Naive thymus-derived CD4-positive, alpha-beta T cell (primary cell): ENCODE measurements at regions of chr2 and their contacts with region 1.

Region 1: GRCh38 chr2:135985018-135985825 is at the start of gene DARS1:
- DNase-seq: peak; percentile 67 to 89 (median 78)
- ATAC-seq: peak; percentile 92
- H3K4me3 ChIP-seq: peak within 1 kb of the TSS; percentile 82
- H3K4me3 Mint-ChIP-seq: peak within 1 kb of the TSS; percentile 90 to 99 (median 97)
- H3K27ac ChIP-seq: peak within 1 kb of the TSS; percentile 95
- H3K27ac Mint-ChIP-seq: peak within 1 kb of the TSS; percentile 98 to 99 (median 98)
- H3K4me1 ChIP-seq: peaks cover 0 to 24% of the 10 kb centered on the region in 2 donors
- H3K4me1 Mint-ChIP-seq: peaks cover 9 to 66% (median 54%) of the 10 kb centered on the region in 7 donors
- H3K27me3 ChIP-seq: no peaks in the 10 kb centered on the region
- H3K27me3 Mint-ChIP-seq: no peaks in the 10 kb centered on the region
- total RNA-seq, gene DARS1: 45.3 to 140 (median 63.4) TPM

Region 2: GRCh38 chr2:134918526-134919340 is 1066.5 kb before region 1 on chr2 and contains the start of gene CCNT2:
- CTCF ChIA-PET with region 1: no interaction called
- POLR2A ChIA-PET with region 1: no interaction called
- intact Hi-C with region 1: loop called in 1 of 2 experiments (anchors 2 kb)
- DNase-seq: peak; percentile 99 to 100 (median 100)
- ATAC-seq: peak; percentile 90
- H3K4me3 ChIP-seq: peak within 1 kb of the TSS; percentile 96
- H3K4me3 Mint-ChIP-seq: peak within 1 kb of the TSS; percentile 86 to 98 (median 93)
- H3K27ac ChIP-seq: peak within 1 kb of the TSS; percentile 97
- H3K27ac Mint-ChIP-seq: peak within 1 kb of the TSS; percentile 91 to 99 (median 96)
- H3K4me1 ChIP-seq: peaks cover 31 to 45% of the 10 kb centered on the region in 2 donors
- H3K4me1 Mint-ChIP-seq: peaks cover 18 to 71% (median 48%) of the 10 kb centered on the region in 7 donors
- H3K27me3 ChIP-seq: no peaks in the 10 kb centered on the region
- H3K27me3 Mint-ChIP-seq: peaks cover 0 to 14% (median 0%) of the 10 kb centered on the region in 5 donors
- total RNA-seq, gene CCNT2: 49.8 to 78.1 (median 67.9) TPM

Region 3: DNA sequence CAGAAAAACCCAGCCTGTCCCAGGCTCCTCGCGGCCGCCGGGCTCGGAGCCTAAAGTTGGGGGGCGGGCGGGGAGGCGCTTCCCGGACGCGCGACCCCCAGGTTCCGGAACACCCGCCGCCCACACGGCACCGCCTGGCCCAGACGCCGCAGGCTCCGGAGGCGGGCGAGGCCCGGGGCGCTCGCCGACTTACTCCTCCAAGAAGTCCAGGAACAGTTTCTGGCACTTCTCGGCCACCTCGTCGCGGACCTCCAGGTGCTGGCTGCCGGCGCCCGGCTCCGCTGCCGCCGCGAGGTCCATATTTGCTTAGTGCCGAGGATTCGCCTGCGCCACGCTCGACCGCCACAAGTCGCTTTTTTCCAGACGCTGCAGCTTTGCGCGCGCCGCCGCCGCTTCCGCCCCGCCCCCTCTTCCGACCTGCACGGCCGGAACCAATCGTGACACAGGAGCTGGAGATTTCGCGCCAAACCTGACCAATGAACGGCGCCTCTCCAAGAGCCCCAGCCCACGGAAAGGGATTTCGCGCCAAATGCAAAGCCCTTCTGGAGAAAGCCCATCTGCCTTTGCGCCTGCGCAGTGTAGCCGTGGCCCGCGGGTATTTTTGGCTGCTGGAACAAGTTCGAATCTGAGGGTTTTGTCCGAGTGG is 109.0 kb before region 1 on chr2 and contains the start of gene MCM6:
- CTCF ChIA-PET with region 1: no interaction called
- POLR2A ChIA-PET with region 1: interaction called, 3 read pairs
- intact Hi-C with region 1: loop called (anchors 1 to 2 kb)
- DNase-seq: peak; percentile 91 to 99 (median 97)
- ATAC-seq: peak; percentile 96
- H3K4me3 ChIP-seq: peak within 1 kb of the TSS; percentile 83
- H3K4me3 Mint-ChIP-seq: peak within 1 kb of the TSS; percentile 85 to 97 (median 93)
- H3K27ac ChIP-seq: peak within 1 kb of the TSS; percentile 84
- H3K27ac Mint-ChIP-seq: peak within 1 kb of the TSS; percentile 84 to 97 (median 95)
- H3K4me1 ChIP-seq: peaks cover 12 to 18% of the 10 kb centered on the region in 2 donors
- H3K4me1 Mint-ChIP-seq: peaks cover 23 to 44% (median 41%) of the 10 kb centered on the region in 7 donors
- H3K27me3 ChIP-seq: no peaks in the 10 kb centered on the region
- H3K27me3 Mint-ChIP-seq: peaks cover 0 to 5% (median 0%) of the 10 kb centered on the region in 5 donors
- total RNA-seq, gene MCM6: 12.1 to 105 (median 21.6) TPM

Region 4: GRCh38 chr2:135997380-135997779 is 12.2 kb after region 1 on chr2:
- CTCF ChIA-PET with region 1: no interaction called
- POLR2A ChIA-PET with region 1: interaction called, 4 read pairs
- intact Hi-C with region 1: loop called in 1 of 2 experiments (anchors 1 kb)
- DNase-seq: no peak
- ATAC-seq: peak; percentile 83
- H3K4me3 ChIP-seq: no peak overlapping the region
- H3K4me3 Mint-ChIP-seq: no peak overlapping the region
- H3K27ac ChIP-seq: no peak overlapping the region
- H3K27ac Mint-ChIP-seq: peak overlapping the region in 2 of 9 donors; percentile 48 to 72
- H3K4me1 ChIP-seq: no peaks in the 10 kb centered on the region
- H3K4me1 Mint-ChIP-seq: peaks cover 7 to 45% (median 33%) of the 10 kb centered on the region in 7 donors
- H3K27me3 ChIP-seq: no peaks in the 10 kb centered on the region
- H3K27me3 Mint-ChIP-seq: no peaks in the 10 kb centered on the region

Region 5: DNA sequence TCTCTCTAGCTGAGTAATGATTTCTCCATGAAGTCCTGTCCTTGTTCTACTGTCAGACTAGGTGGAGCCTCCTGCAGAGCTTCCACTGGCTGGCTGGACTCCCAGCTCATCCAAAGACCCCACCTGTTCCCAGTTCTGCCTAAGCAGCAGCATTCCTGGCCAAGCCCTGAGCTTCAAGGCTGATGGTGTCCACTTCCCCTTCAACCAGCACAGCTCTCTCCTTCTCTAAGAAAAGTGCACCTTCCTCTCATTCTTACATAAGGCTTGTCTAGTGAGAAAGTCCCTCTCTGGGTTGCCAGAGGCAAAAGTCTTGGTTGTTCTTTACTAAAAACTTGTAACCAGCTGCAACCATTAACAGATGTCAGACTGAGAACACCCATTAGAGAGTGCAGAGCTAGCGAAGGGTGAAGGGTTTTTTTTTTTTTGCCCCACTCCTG is 73.8 kb after region 1 on chr2:
- CTCF ChIA-PET with region 1: no interaction called
- POLR2A ChIA-PET with region 1: interaction called, 5 read pairs
- intact Hi-C with region 1: loop called in 1 of 2 experiments (anchors 1 kb)
- DNase-seq: no peak
- ATAC-seq: no peak
- H3K4me3 ChIP-seq: no peak overlapping the region
- H3K4me3 Mint-ChIP-seq: peak overlapping the region in 2 of 10 donors; percentile 43 to 50
- H3K27ac ChIP-seq: no peak overlapping the region
- H3K27ac Mint-ChIP-seq: peak overlapping the region in 5 of 9 donors; percentile 16 to 90 (median 65)
- H3K4me1 ChIP-seq: peaks cover 43 to 44% of the 10 kb centered on the region in 2 donors
- H3K4me1 Mint-ChIP-seq: peaks cover 46 to 90% (median 80%) of the 10 kb centered on the region in 7 donors
- H3K27me3 ChIP-seq: no peaks in the 10 kb centered on the region
- H3K27me3 Mint-ChIP-seq: no peaks in the 10 kb centered on the region

Region 6: DNA sequence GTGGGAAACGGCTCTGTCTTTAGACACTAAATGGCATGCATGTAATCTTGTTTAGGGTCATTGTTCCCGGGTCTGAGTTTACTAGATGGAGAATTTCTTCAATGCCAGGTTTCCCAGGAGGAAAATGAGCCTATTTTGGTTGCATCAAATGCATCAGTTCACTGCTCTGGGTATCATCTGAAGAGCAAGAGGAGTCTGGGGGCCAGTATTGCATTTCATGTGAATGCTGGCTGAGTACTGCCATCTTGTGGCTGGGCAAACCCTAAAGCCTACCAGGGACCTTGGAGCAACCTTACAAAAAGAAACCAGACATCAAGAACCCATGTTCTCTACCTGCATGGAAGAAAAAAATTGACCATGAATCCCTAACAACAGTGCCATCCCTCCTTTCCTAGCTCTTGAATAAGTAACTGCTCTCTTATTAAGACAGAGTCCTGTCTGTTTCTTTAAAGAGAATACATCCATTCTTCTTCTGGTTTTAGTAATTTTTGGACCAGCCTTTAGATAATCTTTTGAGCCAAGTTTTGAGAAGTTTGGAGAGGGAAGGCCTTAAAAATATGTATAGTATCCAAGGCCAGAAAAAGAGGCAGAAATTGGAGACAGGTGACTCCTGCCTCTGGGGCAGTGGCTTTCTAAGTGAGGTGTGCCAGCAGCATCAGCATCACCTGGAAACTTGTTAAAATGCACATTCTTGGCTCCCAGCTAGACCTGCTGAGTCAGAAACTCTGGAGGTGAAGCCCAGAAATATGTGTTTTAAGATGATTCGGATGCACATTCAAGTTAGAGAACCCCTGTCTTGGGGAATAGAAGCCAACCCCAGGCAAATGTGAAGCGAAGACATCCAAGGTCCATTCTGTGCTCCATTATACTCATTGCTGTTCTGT is 393.7 kb after region 1 on chr2:
- CTCF ChIA-PET with region 1: interaction called, 5 read pairs
- POLR2A ChIA-PET with region 1: interaction called, 3 read pairs
- intact Hi-C with region 1: loop called (anchors 1 kb)
- DNase-seq: peak; percentile 44 to 81 (median 75)
- ATAC-seq: peak; percentile 69
- H3K4me3 ChIP-seq: no peak overlapping the region
- H3K4me3 Mint-ChIP-seq: peak overlapping the region in 1 of 10 donors; percentile 12
- H3K27ac ChIP-seq: no peak overlapping the region
- H3K27ac Mint-ChIP-seq: peak overlapping the region in 6 of 9 donors; percentile 48 to 93 (median 82)
- H3K4me1 ChIP-seq: peaks cover 20 to 34% of the 10 kb centered on the region in 2 donors
- H3K4me1 Mint-ChIP-seq: peaks cover 32 to 84% (median 65%) of the 10 kb centered on the region in 7 donors
- H3K27me3 ChIP-seq: no peaks in the 10 kb centered on the region
- H3K27me3 Mint-ChIP-seq: no peaks in the 10 kb centered on the region